ENCODE measurements at regions of chr16 and their contacts with region 1.

Region 1: DNA sequence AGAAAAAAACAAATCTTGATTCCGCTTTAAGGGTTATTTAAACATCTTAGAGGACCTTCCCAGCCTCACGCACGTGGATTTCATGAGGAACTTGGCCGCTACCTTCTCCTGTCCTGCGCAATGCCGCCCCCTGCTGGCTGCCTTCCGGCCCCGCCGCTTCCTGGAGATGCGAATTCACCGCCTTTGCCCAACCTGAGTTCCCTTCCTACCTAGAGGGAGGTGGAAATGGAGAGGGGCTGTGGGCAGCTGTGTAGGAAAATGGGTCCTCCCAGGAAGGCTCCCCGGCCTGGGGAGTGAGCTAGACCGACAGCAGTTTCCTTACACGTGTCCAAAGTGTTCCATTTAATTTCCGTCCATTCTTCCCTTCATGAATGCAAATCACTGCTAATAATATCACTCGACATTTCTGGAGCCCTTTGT is 1.0 kb upstream of the ABCC12 start:
- DNase-seq: peak; percentile 84
- ATAC-seq: peak; percentile 83 to 89

Region 2: GRCh38 chr16:46954562-46954961 is 1202.2 kb before region 1 on chr16:
- intact Hi-C with region 1: loop called in 1 of 2 experiments (anchors 10 kb)
- DNase-seq: no peak
- ATAC-seq: no peak

Region 3: GRCh38 chr16:47037746-47038458 is 1118.9 kb before region 1 on chr16:
- intact Hi-C with region 1: loop called in 1 of 2 experiments (anchors 5 kb)
- DNase-seq: peak; percentile 92
- ATAC-seq: peak; percentile 98 to 99

Region 4: GRCh38 chr16:47141773-47142485 is 1014.9 kb before region 1 on chr16:
- intact Hi-C with region 1: loop called (anchors 1 to 10 kb)
- DNase-seq: peak; percentile 80
- ATAC-seq: peak; percentile 75 to 92

Region 5: DNA sequence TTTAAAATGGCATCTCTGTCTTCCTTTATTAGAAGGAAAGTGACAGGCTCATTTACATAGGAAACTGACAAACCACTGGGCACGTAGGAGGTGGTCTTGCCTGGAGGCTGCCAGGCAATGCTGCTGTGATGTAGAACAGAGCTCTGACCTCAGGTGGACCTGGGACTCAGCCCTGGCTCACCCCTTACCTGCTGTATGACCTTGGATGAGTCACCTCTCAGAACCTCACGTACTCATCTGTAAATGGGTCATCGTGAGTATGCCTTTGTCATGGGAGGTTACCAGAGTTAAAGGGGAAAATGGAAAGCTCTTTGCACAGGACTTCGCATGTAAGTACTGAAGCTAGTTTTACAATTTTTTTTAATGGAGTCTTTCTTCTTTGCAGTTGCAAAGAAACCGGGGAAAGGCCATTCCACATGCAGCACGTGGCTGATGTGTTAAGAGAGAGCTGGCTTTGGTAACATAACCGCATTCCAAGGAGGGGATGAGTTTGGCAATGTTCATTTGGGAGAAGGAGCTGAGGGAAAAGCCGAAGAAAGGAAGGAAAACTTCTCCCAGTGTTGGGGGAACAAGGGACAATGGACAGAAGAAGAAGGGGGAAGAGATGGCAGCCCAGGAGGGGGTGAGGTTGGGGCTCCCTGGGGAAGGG is 49.9 kb after region 1 on chr16:
- intact Hi-C with region 1: no loop called
- DNase-seq: no peak
- ATAC-seq: peak in 1 of 2 donors; percentile 62